ENCODE measurements at regions of chr12 and their contacts with region 1.

Region 1: GRCh38 chr12:55738123-55739024 is 4.5 kb upstream of the GDF11 start:
- DNase-seq: no peak
- H3K4me3 ChIP-seq: peak overlapping the region; percentile 78
- CTCF ChIP-seq: peak; percentile 56

Region 2: GRCh38 chr12:55659486-55660385 is 78.6 kb before region 1 on chr12:
- CTCF ChIA-PET with region 1: interaction called, 55 read pairs
- POLR2A ChIA-PET with region 1: no interaction called
- DNase-seq: no peak
- H3K4me3 ChIP-seq: no peak overlapping the region
- CTCF ChIP-seq: peak; percentile 46

Region 3: DNA sequence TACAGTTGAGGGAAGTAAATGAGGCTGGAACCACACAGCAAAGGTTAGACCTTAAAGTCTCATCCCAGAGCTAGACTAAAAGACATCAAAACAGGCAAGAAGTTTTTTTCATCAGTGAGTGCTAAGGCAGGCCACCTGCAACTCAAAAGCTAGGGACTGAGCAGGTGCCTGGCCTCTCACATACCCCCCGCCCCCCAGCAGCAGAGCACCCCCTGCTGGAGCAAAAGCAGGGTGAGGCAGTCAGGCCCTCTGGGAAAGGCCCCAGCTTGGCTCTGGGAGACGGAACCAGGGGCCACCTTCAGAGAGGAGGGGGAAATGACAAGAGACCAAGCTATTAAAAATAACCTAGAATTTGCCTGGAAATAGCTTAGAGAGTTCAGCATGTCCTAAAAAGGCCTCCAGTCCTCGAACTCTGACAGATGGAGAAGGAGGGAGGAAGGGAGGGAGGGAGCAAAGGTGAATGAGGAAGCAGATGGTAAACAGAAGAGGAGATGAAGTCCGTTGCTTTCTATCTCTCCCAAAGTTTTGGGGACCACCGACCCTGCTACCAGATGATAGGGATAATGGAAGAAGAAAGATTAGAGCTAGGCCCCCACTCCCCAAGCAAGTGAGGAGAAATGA is 32.5 kb before region 1 on chr12:
- CTCF ChIA-PET with region 1: no interaction called
- POLR2A ChIA-PET with region 1: no interaction called
- DNase-seq: no peak
- H3K4me3 ChIP-seq: no peak overlapping the region
- CTCF ChIP-seq: peak; percentile 36

Region 4: GRCh38 chr12:55760663-55761062 is 22.3 kb after region 1 on chr12:
- CTCF ChIA-PET with region 1: interaction called, 42 read pairs
- POLR2A ChIA-PET with region 1: no interaction called
- DNase-seq: no peak
- H3K4me3 ChIP-seq: no peak overlapping the region
- CTCF ChIP-seq: no peak

Region 5: GRCh38 chr12:55812088-55812487 is 73.7 kb after region 1 on chr12:
- CTCF ChIA-PET with region 1: interaction called, 33 read pairs
- POLR2A ChIA-PET with region 1: no interaction called
- DNase-seq: no peak
- H3K4me3 ChIP-seq: no peak overlapping the region
- CTCF ChIP-seq: no peak

Region 6: DNA sequence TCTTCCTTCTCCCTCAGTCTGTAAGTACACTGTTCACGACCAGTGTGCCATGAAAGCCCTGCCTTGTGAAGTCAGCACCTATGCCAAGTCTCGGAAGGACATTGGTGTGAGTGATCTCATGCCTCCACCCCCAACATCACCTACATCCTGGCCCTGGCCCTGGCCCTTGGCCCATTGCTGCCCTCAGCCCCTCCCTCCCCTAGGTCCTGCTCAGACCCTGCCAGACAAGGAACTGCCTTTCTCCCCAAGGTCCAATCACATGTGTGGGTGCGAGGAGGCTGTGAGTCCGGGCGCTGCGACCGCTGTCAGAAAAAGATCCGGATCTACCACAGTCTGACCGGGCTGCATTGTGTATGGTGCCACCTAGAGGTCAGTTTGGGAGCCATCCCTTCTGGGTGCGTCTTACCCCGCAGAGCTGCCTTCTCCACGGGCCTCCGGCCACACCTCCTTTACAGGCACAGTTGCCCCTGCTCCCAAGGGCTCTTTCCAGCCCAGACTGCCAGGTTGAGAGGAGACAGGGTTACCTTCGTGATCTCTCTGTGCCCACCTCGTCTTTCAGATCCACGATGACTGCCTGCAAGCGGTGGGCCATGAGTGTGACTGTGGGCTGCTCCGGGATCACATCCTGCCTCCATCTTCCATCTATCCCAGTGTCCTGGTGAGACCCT is 201.8 kb after region 1 on chr12:
- CTCF ChIA-PET with region 1: interaction called, 193 read pairs
- POLR2A ChIA-PET with region 1: no interaction called
- DNase-seq: no peak
- H3K4me3 ChIP-seq: no peak overlapping the region
- CTCF ChIP-seq: peak; percentile 93

Region 7: GRCh38 chr12:55982319-55982936 is 244.1 kb after region 1 on chr12:
- CTCF ChIA-PET with region 1: interaction called, 21 read pairs
- POLR2A ChIA-PET with region 1: no interaction called
- DNase-seq: no peak
- H3K4me3 ChIP-seq: no peak overlapping the region
- CTCF ChIP-seq: no peak

Region 8: DNA sequence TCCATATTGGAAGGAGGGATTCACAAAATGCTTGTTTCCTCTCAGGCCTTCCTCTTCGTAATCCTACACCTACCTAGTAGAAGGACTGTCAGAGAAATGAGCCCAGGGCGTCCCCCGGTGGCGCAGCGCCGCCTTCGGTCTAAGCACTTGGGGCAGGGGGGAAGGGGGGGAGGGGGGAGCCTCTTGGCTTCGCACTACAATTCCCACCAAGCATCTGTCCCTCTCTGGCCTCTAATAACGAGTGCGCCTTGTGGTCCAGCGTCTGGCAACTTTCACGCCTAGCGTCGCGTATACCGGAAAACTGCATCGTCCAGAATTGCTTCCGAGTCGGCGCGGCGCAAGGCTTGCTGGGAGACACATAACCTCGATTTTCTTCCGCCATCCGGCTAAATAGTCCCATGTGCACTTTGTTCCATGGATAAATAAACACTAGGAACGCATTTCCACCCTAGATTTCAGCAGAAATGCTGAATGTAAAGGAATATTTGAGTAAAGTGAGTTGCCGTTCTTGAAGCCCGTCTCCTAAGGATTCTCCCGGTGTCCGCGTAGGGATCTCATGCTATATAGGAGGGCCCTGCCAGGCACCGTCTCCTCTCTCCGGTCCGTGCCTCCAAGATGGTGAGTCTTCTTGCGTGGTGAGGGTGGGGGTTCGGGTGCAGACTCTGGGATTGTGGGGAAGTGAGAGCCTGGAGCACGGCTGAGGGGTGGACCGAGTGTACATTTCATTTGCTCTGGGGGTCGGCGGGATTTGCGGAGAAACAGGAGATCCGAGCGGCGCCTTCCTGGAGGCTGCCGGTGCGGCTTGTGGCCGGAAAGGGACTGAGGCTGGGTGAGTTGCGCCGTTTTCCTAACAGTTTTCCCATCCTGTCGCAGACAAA is 303.4 kb after region 1 on chr12 and contains the start of gene RPS26:
- CTCF ChIA-PET with region 1: interaction called, 35 read pairs
- POLR2A ChIA-PET with region 1: interaction called, 3 read pairs
- DNase-seq: peak; percentile 96
- H3K4me3 ChIP-seq: peak within 1 kb of the TSS; percentile 95
- CTCF ChIP-seq: peak; percentile 64

Measured in AG04449 (cell line).